ENCODE measurements at regions of chr2 and their contacts with region 1.

Region 1: GRCh38 chr2:138501425-138502283 is at the start of gene SPOPL:
- DNase-seq: peak; percentile 85
- H3K4me3 Mint-ChIP-seq: peak within 1 kb of the TSS; percentile 94
- H3K27ac Mint-ChIP-seq: peak within 1 kb of the TSS; percentile 93
- H3K4me1 Mint-ChIP-seq: peaks cover 16% of the 10 kb centered on the region
- H3K27me3 Mint-ChIP-seq: no peaks in the 10 kb centered on the region
- CTCF ChIP-seq: peak; percentile 26
- total RNA-seq, gene SPOPL: 15.8 and 17.7 TPM in 2 replicates

Region 2: GRCh38 chr2:137947728-137948336 is 553.8 kb before region 1 on chr2:
- CTCF ChIA-PET with region 1: interaction called, 3 read pairs
- POLR2A ChIA-PET with region 1: no interaction called
- intact Hi-C with region 1: loop called (anchors 10 kb)
- DNase-seq: peak; percentile 72
- H3K4me3 Mint-ChIP-seq: no peak overlapping the region
- H3K27ac Mint-ChIP-seq: no peak overlapping the region
- H3K4me1 Mint-ChIP-seq: peaks cover 11% of the 10 kb centered on the region
- H3K27me3 Mint-ChIP-seq: no peaks in the 10 kb centered on the region
- CTCF ChIP-seq: peak; percentile 57

Region 3: GRCh38 chr2:138071720-138072719 is 429.6 kb before region 1 on chr2:
- CTCF ChIA-PET with region 1: interaction called, 3 read pairs
- POLR2A ChIA-PET with region 1: no interaction called
- intact Hi-C with region 1: loop called (anchors 10 kb)
- DNase-seq: peak; percentile 98
- H3K4me3 Mint-ChIP-seq: peak overlapping the region; percentile 56
- H3K27ac Mint-ChIP-seq: peak overlapping the region; percentile 39
- H3K4me1 Mint-ChIP-seq: peaks cover 6% of the 10 kb centered on the region
- H3K27me3 Mint-ChIP-seq: no peaks in the 10 kb centered on the region
- CTCF ChIP-seq: no peak

Region 4: GRCh38 chr2:138335036-138335435 is 166.6 kb before region 1 on chr2:
- CTCF ChIA-PET with region 1: no interaction called
- POLR2A ChIA-PET with region 1: no interaction called
- intact Hi-C with region 1: no loop called
- DNase-seq: no peak
- H3K4me3 Mint-ChIP-seq: no peak overlapping the region
- H3K27ac Mint-ChIP-seq: no peak overlapping the region
- H3K4me1 Mint-ChIP-seq: no peaks in the 10 kb centered on the region
- H3K27me3 Mint-ChIP-seq: no peaks in the 10 kb centered on the region
- CTCF ChIP-seq: no peak

Region 5: GRCh38 chr2:138373993-138374408 is 127.7 kb before region 1 on chr2:
- CTCF ChIA-PET with region 1: no interaction called
- POLR2A ChIA-PET with region 1: interaction called, 3 read pairs
- intact Hi-C with region 1: loop called (anchors 2 kb)
- DNase-seq: peak; percentile 63
- H3K4me3 Mint-ChIP-seq: no peak overlapping the region
- H3K27ac Mint-ChIP-seq: no peak overlapping the region
- H3K4me1 Mint-ChIP-seq: no peaks in the 10 kb centered on the region
- H3K27me3 Mint-ChIP-seq: no peaks in the 10 kb centered on the region
- CTCF ChIP-seq: peak; percentile 59

Region 6: GRCh38 chr2:138395565-138396306 is 105.9 kb before region 1 on chr2:
- CTCF ChIA-PET with region 1: no interaction called
- POLR2A ChIA-PET with region 1: interaction called, 3 read pairs
- intact Hi-C with region 1: loop called (anchors 1 kb)
- DNase-seq: peak; percentile 94
- H3K4me3 Mint-ChIP-seq: no peak overlapping the region
- H3K27ac Mint-ChIP-seq: peak overlapping the region; percentile 93
- H3K4me1 Mint-ChIP-seq: peaks cover 22% of the 10 kb centered on the region
- H3K27me3 Mint-ChIP-seq: no peaks in the 10 kb centered on the region
- CTCF ChIP-seq: no peak

Region 7: DNA sequence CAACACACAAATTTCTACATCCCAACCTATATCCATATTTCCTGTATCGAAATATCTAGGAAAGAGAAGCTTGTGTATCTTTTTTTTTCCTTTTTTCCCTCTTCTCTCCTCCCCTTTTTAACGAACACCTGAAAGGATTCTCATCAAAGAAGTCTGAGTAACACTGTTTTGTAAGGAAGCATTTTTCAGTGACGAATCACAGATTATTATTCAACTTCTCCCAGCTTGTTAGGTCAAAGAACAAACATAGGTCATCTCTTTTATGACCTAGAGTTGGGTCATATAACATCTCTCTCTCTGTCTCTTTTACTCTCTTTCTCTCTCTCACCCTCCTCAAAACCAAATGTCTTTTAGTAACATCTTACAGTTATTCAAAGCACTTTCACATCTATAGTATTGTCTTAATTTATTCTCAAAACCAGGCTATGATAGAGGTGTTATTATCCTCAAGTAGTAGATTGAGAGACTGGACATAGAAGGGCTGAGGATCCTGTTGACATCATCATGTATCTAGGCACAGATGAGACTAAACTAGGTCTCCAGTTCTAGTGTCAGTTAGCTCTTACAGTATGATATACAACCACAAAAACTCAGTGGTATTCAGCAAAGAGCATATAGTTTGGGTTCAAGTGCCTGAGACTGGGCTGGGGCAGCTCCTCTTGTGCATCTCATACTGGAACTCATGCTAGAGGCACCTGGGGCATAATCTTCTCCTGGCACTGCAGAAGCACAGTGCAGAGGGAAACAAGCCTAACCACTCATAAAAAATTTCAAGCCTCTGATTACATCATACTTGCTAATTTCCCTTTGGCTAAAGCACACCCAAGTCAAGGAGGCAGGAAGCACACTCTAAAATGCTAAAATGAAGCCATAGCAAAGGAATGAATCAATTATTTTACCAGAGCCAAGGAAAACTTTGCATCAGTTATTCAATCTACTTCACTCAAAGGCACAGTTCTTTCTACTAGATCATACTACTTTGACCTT is 80.0 kb before region 1 on chr2:
- CTCF ChIA-PET with region 1: interaction called, 3 read pairs
- POLR2A ChIA-PET with region 1: interaction called, 11 read pairs
- intact Hi-C with region 1: no loop called
- DNase-seq: peak; percentile 80
- H3K4me3 Mint-ChIP-seq: peak overlapping the region; percentile 41
- H3K27ac Mint-ChIP-seq: peak overlapping the region; percentile 43
- H3K4me1 Mint-ChIP-seq: peaks cover 19% of the 10 kb centered on the region
- H3K27me3 Mint-ChIP-seq: no peaks in the 10 kb centered on the region
- CTCF ChIP-seq: no peak

Region 8: GRCh38 chr2:138516030-138516704 is 14.5 kb after region 1 on chr2:
- CTCF ChIA-PET with region 1: interaction called, 3 read pairs
- POLR2A ChIA-PET with region 1: interaction called, 58 read pairs
- intact Hi-C with region 1: no loop called
- DNase-seq: no peak
- H3K4me3 Mint-ChIP-seq: no peak overlapping the region
- H3K27ac Mint-ChIP-seq: no peak overlapping the region
- H3K4me1 Mint-ChIP-seq: peaks cover 21% of the 10 kb centered on the region
- H3K27me3 Mint-ChIP-seq: no peaks in the 10 kb centered on the region
- CTCF ChIP-seq: no peak

Region 9: DNA sequence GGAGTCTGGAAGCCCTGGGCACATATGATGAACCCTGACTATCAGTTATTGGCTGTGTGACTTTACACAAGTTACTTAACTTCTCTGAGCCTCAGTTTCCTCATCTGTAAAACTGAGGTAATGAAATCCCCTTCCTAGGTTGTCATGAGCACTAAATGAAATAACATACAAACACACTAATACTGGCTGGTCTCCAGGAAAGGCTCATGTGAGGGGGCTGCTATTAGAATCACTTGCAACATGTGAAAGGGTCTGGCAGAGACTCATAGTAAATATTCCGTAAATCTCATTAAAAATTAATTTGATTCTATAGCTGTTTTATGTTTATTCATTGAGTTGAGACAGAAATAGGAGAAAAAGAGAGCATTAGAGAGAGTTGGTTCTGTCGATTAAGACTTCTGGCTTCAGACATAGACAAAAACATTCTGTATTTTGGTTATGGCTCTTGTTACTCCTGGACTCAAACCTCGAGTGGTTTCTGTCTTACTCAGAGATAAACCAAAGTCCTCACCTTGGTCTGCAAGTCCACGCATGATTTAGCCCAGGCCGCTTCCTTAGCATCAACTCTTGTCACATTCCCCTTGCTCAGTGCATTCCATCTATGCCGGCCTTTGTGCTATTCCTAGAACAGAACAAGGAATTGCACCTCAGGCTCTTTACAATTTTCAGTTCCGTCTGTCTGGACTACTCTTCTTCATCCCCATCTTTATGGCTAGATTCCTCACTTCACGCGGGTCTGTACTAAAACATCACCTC is 139.4 kb after region 1 on chr2:
- CTCF ChIA-PET with region 1: no interaction called
- POLR2A ChIA-PET with region 1: no interaction called
- intact Hi-C with region 1: no loop called
- DNase-seq: no peak
- H3K4me3 Mint-ChIP-seq: no peak overlapping the region
- H3K27ac Mint-ChIP-seq: no peak overlapping the region
- H3K4me1 Mint-ChIP-seq: peaks cover 5% of the 10 kb centered on the region
- H3K27me3 Mint-ChIP-seq: no peaks in the 10 kb centered on the region
- CTCF ChIP-seq: no peak

Region 10: DNA sequence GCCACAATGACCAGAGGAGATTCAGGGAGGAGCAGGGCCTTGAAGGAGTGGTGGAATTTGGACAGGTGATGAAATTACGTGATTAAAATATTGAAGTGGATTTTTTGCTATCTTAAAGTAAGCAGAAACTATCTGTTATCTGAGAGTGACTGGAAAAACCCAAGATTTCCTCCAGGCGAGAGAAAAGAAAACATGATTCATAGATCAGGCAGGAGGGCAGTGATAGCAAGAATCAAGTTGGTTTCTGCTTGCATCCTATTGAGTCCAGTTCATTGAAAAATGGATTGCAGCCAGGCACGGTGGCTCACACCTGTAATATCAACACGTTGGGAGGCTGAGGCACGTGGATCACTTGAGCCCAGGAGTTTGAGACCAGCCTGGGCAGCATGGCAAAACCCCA is 150.7 kb after region 1 on chr2:
- CTCF ChIA-PET with region 1: no interaction called
- POLR2A ChIA-PET with region 1: no interaction called
- intact Hi-C with region 1: no loop called
- DNase-seq: no peak
- H3K4me3 Mint-ChIP-seq: no peak overlapping the region
- H3K27ac Mint-ChIP-seq: no peak overlapping the region
- H3K4me1 Mint-ChIP-seq: no peaks in the 10 kb centered on the region
- H3K27me3 Mint-ChIP-seq: no peaks in the 10 kb centered on the region
- CTCF ChIP-seq: no peak

Region 11: GRCh38 chr2:139045524-139045923 is 543.9 kb after region 1 on chr2:
- CTCF ChIA-PET with region 1: no interaction called
- POLR2A ChIA-PET with region 1: no interaction called
- intact Hi-C with region 1: no loop called
- DNase-seq: no peak
- H3K4me3 Mint-ChIP-seq: no peak overlapping the region
- H3K27ac Mint-ChIP-seq: no peak overlapping the region
- H3K4me1 Mint-ChIP-seq: no peaks in the 10 kb centered on the region
- H3K27me3 Mint-ChIP-seq: peaks cover 74% of the 10 kb centered on the region
- CTCF ChIP-seq: no peak